ENCODE measurements at regions of chr5 and their contacts with region 1.

Region 1: DNA sequence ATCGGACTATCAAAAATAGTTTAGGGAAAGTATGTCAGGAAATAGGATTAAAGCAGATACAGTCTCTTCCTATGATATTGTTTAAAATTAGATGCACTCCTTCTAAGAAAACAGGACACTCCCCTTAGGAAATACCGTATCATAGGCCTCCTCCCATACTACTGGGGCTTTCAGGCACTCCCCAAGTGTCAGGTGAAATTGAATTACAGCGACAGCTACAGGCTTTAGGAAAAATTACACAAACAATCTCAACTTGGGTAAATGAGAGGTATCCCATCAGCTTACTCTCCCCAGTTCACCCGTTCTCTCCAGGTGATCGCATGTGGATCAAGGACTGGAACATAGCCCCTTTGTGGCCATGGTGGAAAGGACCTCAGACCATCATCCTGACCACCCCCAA is 110.4 kb upstream of the EPB41L4A start:
- DNase-seq: no peak
- H3K4me3 ChIP-seq: no peak overlapping the region
- H3K27ac ChIP-seq: no peak overlapping the region
- H3K4me1 ChIP-seq: peaks cover 0 to 4% (median 2%) of the 10 kb centered on the region in 4 experiments; a peak in 3 of 7 replicates
- H3K27me3 ChIP-seq: no peaks in the 10 kb centered on the region
- CTCF ChIP-seq: peak in 2 of 3 experiments; percentile 37 to 60; a peak in 2 of 4 replicates
- EP300 ChIP-seq: no peak
- POLR2A ChIP-seq: no peak
- RAD21 ChIP-seq: peak; percentile 44 to 54

Region 2: DNA sequence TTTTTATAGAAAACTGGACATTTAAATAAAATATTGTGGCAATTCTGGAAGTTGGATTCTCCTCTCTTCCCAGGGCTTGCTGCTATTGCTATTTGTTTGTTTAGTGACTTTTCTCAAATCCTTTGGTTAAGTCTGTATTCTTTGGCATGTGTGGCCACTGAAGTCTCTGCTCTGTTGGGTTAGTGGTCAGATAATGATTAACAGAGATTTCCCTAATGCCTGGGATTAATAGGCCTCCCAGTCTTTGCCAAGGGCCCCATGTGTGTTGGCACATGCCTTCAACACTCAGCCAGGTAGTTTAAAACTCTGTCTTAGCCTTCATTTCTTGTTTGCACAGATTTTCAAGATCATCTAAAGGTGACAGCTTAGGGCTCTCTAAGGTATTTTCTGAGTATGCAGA is 17.6 kb before region 1 on chr5:
- CTCF ChIA-PET with region 1: interaction called, 23 read pairs
- POLR2A ChIA-PET with region 1: no interaction called
- DNase-seq: no peak
- H3K4me3 ChIP-seq: no peak overlapping the region
- H3K27ac ChIP-seq: no peak overlapping the region
- H3K4me1 ChIP-seq: no peaks in the 10 kb centered on the region
- H3K27me3 ChIP-seq: no peaks in the 10 kb centered on the region
- CTCF ChIP-seq: no peak
- EP300 ChIP-seq: no peak
- POLR2A ChIP-seq: no peak
- RAD21 ChIP-seq: no peak

Region 3: DNA sequence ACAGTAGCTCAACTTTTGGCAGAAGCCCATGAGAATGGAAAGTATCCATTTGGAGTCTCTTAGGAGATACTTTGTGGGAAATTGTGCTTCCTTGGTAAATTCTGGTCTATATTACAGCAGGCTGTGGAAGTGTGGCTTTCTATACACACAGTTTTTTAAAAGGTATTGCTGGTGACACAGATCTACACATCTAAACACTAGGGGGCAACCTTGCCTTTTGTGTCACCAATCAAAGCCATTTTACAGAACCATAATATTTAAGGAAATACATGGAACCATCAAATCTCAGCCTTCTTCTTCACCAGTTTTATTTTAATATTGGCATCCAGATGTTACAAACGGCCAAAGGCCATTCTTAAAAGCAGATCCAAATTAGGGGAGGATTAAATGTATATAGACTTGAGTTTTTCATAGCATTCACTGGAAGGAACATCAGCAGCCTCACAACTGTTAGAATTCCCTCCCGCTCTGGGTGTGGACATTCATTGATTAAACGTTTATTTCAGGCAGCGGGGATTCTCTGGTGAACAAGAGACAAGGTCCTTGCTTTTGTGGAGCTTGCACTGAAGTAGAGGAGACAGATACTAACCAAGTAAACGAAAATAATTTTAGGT is 22.0 kb after region 1 on chr5:
- CTCF ChIA-PET with region 1: interaction called, 16 read pairs
- POLR2A ChIA-PET with region 1: no interaction called
- DNase-seq: no peak
- H3K4me3 ChIP-seq: no peak overlapping the region
- H3K27ac ChIP-seq: no peak overlapping the region
- H3K4me1 ChIP-seq: no peaks in the 10 kb centered on the region
- H3K27me3 ChIP-seq: no peaks in the 10 kb centered on the region
- CTCF ChIP-seq: peak in 2 of 3 experiments; percentile 61 to 63; a peak in 2 of 4 replicates
- EP300 ChIP-seq: no peak
- POLR2A ChIP-seq: no peak
- RAD21 ChIP-seq: peak; percentile 86 to 87

Region 4: DNA sequence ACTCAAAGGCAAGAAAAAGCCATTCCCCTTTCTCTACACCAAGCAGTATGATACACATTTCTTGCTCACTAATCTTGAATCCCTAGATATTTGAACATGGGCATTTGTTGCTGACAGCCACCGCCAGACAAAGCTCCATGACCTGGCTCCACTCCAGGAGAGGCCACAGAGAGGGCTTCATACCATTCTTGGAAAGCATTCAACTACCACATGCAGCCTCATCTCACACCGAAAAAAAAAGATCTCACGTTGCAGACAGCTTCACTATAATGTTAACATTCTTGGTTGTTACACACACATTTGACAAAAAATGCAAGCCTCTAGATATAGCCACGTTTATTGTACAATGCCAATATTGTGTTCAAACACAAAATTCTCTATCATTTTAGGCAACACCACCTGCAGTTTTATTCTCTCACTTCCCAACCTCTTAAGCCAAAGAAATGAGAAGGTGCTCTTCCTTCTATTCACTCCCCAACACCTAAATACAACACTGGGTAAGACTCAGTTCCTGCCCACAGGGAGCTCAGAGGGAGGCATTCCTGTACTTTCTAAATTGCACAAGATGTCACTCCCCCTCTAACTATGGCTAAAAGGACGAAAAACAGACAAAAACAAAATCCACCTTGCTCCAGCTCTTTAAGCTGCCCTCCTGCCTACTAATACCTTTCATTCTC is 682.9 kb after region 1 on chr5:
- CTCF ChIA-PET with region 1: no interaction called
- POLR2A ChIA-PET with region 1: no interaction called
- DNase-seq: no peak
- H3K4me3 ChIP-seq: no peak overlapping the region
- H3K27ac ChIP-seq: no peak overlapping the region
- H3K4me1 ChIP-seq: peaks cover 0 to 28% (median 15%) of the 10 kb centered on the region in 4 experiments; a peak in 5 of 7 replicates
- H3K27me3 ChIP-seq: no peaks in the 10 kb centered on the region
- CTCF ChIP-seq: no peak
- EP300 ChIP-seq: no peak
- POLR2A ChIP-seq: no peak
- RAD21 ChIP-seq: no peak

Measured in H1 (cell line).